H1 (cell line): ENCODE measurements at regions of chr5 and their contacts with region 1.

Region 1: DNA sequence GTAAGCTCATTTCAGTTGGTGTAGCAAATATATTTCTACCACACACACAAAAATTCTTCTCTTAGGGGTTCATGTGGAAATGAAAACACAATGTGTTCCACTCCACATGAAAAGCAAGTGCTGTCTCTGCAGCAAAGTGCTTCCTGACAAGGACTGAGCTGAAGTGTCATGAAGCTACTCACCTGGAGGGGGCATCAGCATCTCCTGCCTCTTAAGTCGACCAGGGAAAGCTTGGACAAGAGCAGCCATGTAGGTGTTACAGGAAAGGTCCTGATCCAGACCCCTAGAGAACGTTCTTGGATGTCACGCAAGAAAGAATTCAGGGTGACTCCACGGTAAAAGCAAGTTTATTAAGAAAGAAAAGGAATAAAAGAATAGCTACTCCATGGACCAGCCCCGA is 62.8 kb downstream of the SV2C start:
- DNase-seq: peak in 1 of 2 experiments; percentile 13
- H3K4me3 ChIP-seq: no peak overlapping the region
- H3K27ac ChIP-seq: no peak overlapping the region
- H3K4me1 ChIP-seq: peaks cover 0 to 4% (median 2%) of the 10 kb centered on the region in 4 experiments; a peak in 2 of 7 replicates
- H3K27me3 ChIP-seq: peaks cover 0 to 2% (median 0%) of the 10 kb centered on the region in 4 experiments; a peak in 1 of 7 replicates
- CTCF ChIP-seq: peak; percentile 42 to 78 (median 65)
- EP300 ChIP-seq: no peak
- POLR2A ChIP-seq: no peak
- RAD21 ChIP-seq: peak; percentile 28 to 48

Region 2: DNA sequence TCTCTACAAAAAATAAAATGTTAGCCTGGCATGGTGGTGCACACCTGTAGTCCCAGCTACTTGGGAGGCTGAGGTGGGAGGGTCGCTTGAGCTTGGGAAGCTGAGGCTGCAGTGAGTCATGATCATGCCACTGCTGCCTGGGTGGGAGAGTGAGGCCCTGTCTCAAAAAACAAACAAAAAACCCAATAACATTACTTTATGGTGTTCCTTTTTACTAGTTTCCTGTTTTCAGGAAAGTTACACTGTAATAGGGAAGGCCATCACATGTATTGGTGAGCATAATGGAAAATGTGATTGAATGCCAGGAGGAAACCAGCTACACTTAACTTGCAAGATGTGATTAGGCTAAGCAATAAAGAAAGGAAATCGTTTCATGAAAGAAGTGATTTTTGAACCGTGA is 20.1 kb before region 1 on chr5:
- CTCF ChIA-PET with region 1: interaction called, 32 read pairs
- POLR2A ChIA-PET with region 1: no interaction called
- DNase-seq: no peak
- H3K4me3 ChIP-seq: no peak overlapping the region
- H3K27ac ChIP-seq: no peak overlapping the region
- H3K4me1 ChIP-seq: no peaks in the 10 kb centered on the region
- H3K27me3 ChIP-seq: no peaks in the 10 kb centered on the region
- CTCF ChIP-seq: no peak
- EP300 ChIP-seq: no peak
- POLR2A ChIP-seq: no peak
- RAD21 ChIP-seq: no peak

Region 3: GRCh38 chr5:76134546-76135045 is 11.3 kb before region 1 on chr5:
- CTCF ChIA-PET with region 1: interaction called, 32 read pairs
- POLR2A ChIA-PET with region 1: no interaction called
- DNase-seq: no peak
- H3K4me3 ChIP-seq: no peak overlapping the region
- H3K27ac ChIP-seq: no peak overlapping the region
- H3K4me1 ChIP-seq: no peaks in the 10 kb centered on the region
- H3K27me3 ChIP-seq: no peaks in the 10 kb centered on the region
- CTCF ChIP-seq: no peak
- EP300 ChIP-seq: no peak
- POLR2A ChIP-seq: no peak
- RAD21 ChIP-seq: no peak

Region 4: GRCh38 chr5:76165711-76166374 is 19.9 kb after region 1 on chr5:
- CTCF ChIA-PET with region 1: interaction called, 11 read pairs
- POLR2A ChIA-PET with region 1: no interaction called
- DNase-seq: no peak
- H3K4me3 ChIP-seq: no peak overlapping the region
- H3K27ac ChIP-seq: no peak overlapping the region
- H3K4me1 ChIP-seq: no peaks in the 10 kb centered on the region
- H3K27me3 ChIP-seq: no peaks in the 10 kb centered on the region
- CTCF ChIP-seq: no peak
- EP300 ChIP-seq: no peak
- POLR2A ChIP-seq: no peak
- RAD21 ChIP-seq: no peak